ENCODE measurements at regions of chr17 and their contacts with region 1.

Region 1: GRCh38 chr17:29549177-29549923 is 17.5 kb downstream of the ABHD15 start:
- DNase-seq: no peak
- H3K4me3 ChIP-seq: no peak overlapping the region
- H3K27ac ChIP-seq: no peak overlapping the region
- H3K4me1 ChIP-seq: no peaks in the 10 kb centered on the region
- H3K27me3 ChIP-seq: no peaks in the 10 kb centered on the region

Region 2: GRCh38 chr17:29369831-29370735 is 179.3 kb before region 1 on chr17:
- in situ Hi-C with region 1: loop called (anchors 25 kb)
- DNase-seq: peak; percentile 92
- H3K4me3 ChIP-seq: peak overlapping the region; percentile 66
- H3K27ac ChIP-seq: peak overlapping the region; percentile 47
- H3K4me1 ChIP-seq: 0 out of 2 replicates have a peak, but pooled peaks cover 3% of the 10 kb centered on the region
- H3K27me3 ChIP-seq: no peaks in the 10 kb centered on the region

Region 3: DNA sequence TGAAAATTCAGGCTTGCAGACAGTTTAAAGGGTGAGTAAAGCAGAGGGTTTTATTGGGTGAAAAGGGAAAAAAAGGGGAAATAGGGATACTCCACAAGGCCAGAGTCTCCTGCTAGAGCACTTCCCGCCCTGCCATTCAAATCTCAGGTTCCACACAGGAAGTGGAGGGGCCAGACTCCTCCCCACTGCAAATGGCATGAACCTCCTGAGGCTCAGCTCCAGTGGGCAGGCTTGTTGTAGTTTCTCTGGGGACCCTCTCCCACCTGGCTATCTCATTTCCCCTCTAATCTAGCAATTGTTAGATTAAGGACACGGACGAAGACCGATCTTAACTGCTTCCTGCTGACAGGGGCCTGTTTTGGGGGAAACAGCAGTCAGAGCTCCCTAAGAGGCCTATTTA is 115.8 kb before region 1 on chr17:
- in situ Hi-C with region 1: no loop called
- DNase-seq: peak; percentile 3
- H3K4me3 ChIP-seq: peak overlapping the region; percentile 29; the same call in 1 of the 2 replicates
- H3K27ac ChIP-seq: no peak overlapping the region
- H3K4me1 ChIP-seq: no peaks in the 10 kb centered on the region
- H3K27me3 ChIP-seq: no peaks in the 10 kb centered on the region

Measured in GM23248 (cell line).